ENCODE measurements at regions of chr10 and their contacts with region 1.

Region 1: GRCh38 chr10:75049316-75050148 is 61.9 kb upstream of the SAMD8 start:
- DNase-seq: no peak
- H3K4me3 ChIP-seq: no peak overlapping the region
- H3K27ac ChIP-seq: no peak overlapping the region
- H3K4me1 ChIP-seq: no peaks in the 10 kb centered on the region
- H3K27me3 ChIP-seq: no peaks in the 10 kb centered on the region
- CTCF ChIP-seq: no peak

Region 2: DNA sequence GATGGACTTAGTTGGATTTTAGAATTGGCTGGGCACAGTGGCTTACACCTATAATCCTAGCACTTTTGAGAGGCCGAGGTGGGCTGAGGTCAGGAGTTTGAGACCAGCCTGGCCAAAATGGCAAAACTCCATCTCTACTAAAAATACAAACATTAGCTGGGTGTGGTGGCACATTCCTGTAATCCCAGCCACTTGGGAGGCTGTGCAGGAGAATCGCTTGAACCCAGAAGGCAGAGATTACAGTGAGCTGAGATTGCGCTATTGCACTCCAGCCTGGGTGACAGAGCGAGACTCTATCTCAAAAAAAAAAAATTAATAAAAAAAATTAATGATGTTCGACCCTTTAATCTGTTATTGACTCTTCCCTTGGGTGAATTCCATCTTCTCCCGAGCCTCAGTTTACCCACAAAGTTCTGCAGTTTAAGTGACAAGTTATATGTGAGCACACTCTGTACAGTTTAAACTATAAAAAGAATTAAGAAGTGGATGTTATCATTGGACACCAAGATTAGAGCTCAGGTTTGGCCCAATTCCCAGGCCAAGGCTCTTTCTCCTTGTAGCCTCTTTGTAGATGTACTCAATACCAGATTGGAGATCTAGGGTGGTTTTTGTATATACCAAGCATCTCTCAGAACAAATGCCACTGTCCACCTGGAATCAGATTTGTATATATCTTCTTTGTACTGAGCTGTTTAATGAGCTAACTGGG is 208.1 kb before region 1 on chr10:
- CTCF ChIA-PET with region 1: no interaction called
- POLR2A ChIA-PET with region 1: no interaction called
- intact Hi-C with region 1: no loop called
- DNase-seq: no peak
- H3K4me3 ChIP-seq: no peak overlapping the region
- H3K27ac ChIP-seq: no peak overlapping the region
- H3K4me1 ChIP-seq: no peaks in the 10 kb centered on the region
- H3K27me3 ChIP-seq: no peaks in the 10 kb centered on the region
- CTCF ChIP-seq: no peak

Region 3: DNA sequence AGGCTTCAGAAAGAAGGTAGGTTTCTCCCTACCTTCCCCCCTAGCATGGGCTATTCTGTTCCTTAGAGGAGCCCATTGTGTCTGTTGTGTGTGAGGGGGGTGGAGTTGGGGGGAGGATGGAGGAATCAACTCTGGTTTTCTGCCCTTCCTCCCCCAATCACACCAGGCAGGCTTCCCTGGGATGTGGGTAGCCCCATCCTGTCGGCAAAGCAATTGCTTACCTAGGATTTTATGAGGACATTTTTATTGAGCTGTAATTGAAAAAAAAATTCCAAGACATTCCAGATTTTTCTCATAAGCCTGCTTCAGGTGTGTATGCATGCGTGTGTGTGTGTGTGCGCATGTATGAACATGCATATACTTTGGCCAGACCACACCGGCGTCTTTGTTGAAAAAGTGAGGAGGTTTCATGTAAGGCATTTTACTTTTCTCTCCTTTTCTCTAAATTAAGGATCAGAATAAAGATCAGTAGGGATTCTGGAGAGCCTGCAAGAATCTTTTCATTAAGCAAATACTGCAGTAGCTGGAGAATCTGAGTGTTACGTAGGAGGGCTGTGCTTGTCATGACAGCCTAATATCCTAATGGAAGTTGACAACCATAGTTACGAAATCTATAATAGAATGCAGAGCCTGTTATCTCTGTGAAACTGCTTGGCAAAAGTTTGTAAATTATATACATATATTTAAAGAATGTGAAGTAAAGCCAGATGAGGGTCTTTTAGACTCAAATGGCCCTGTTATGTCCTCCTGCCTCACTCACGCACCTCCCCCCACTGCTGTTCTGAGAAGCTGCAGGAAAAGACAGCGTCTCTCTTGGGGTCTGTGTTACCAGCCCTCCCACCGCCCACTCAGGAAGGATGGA is 34.7 kb after region 1 on chr10:
- CTCF ChIA-PET with region 1: interaction called, 12 read pairs
- POLR2A ChIA-PET with region 1: no interaction called
- intact Hi-C with region 1: no loop called
- DNase-seq: no peak
- H3K4me3 ChIP-seq: no peak overlapping the region
- H3K27ac ChIP-seq: no peak overlapping the region
- H3K4me1 ChIP-seq: no peaks in the 10 kb centered on the region
- H3K27me3 ChIP-seq: no peaks in the 10 kb centered on the region
- CTCF ChIP-seq: no peak